GM12878 (cell line): ENCODE measurements at regions of chrX and their contacts with region 1.

Region 1: GRCh38 chrX:143115450-143115849 is 89.7 kb downstream of the SPANXN4 start:
- DNase-seq: no peak
- ATAC-seq: no peak
- H3K4me3 ChIP-seq: no peak overlapping the region
- H3K27ac ChIP-seq: no peak overlapping the region
- H3K4me1 ChIP-seq: no peaks in the 10 kb centered on the region
- H3K27me3 ChIP-seq: no peaks in the 10 kb centered on the region
- CTCF ChIP-seq: no peak
- EP300 ChIP-seq: no peak
- POLR2A ChIP-seq: no peak
- RAD21 ChIP-seq: no peak

Region 2: DNA sequence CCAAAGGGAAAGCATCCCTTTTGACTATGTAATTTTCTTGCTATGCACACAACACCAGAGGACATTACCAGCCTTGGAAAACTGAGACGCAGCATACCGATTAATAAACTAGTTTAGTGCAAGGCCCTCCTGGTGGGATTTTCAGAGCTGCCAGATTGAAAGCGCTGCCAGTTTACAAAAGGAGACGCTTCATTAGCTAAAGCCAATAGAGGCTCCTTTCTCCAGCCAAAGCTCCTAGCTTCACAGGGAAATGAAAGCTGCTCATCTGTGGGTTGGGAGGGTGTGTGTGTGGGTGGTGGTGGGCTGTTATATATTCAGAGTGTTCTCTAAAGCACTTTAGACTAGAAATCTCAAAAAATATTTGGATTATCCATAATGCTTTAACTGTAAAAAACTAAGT is 57.3 kb before region 1 on chrX:
- CTCF ChIA-PET with region 1: no interaction called
- POLR2A ChIA-PET with region 1: no interaction called
- RAD21 ChIA-PET with region 1: no interaction called
- SMC1A ChIA-PET with region 1: no interaction called
- in situ Hi-C with region 1: no loop called
- intact Hi-C with region 1: loop called (anchors 10 kb)
- DNase-seq: no peak
- ATAC-seq: no peak
- H3K4me3 ChIP-seq: no peak overlapping the region
- H3K27ac ChIP-seq: no peak overlapping the region
- H3K4me1 ChIP-seq: no peaks in the 10 kb centered on the region
- H3K27me3 ChIP-seq: no peaks in the 10 kb centered on the region
- CTCF ChIP-seq: no peak
- EP300 ChIP-seq: no peak
- POLR2A ChIP-seq: no peak
- RAD21 ChIP-seq: no peak

Region 3: DNA sequence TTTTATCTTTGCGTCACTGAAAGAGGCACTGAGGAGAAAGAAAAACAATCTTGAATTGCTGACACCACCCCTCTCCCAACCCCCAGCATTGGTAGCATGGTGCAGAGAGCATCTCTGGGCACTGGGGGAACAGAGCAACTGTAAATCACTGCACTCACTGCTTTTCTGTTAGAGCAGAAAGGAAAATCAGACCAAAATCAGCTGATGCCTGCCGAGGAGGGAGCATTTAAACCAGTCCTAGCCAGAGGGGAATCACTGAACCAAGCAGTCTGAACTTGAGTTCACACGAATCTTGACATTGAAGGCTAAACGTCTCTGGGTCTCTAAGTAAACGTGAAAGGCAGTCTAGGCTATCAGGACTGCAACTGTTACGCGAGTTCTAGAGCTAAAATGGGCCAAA is 116.0 kb after region 1 on chrX:
- CTCF ChIA-PET with region 1: no interaction called
- POLR2A ChIA-PET with region 1: no interaction called
- RAD21 ChIA-PET with region 1: no interaction called
- SMC1A ChIA-PET with region 1: no interaction called
- in situ Hi-C with region 1: no loop called
- intact Hi-C with region 1: no loop called
- DNase-seq: no peak
- ATAC-seq: no peak
- H3K4me3 ChIP-seq: no peak overlapping the region
- H3K27ac ChIP-seq: no peak overlapping the region
- H3K4me1 ChIP-seq: no peaks in the 10 kb centered on the region
- H3K27me3 ChIP-seq: no peaks in the 10 kb centered on the region
- CTCF ChIP-seq: no peak
- EP300 ChIP-seq: no peak
- POLR2A ChIP-seq: no peak
- RAD21 ChIP-seq: no peak